ENCODE measurements at regions of chr15 and their contacts with region 1.

Region 1: DNA sequence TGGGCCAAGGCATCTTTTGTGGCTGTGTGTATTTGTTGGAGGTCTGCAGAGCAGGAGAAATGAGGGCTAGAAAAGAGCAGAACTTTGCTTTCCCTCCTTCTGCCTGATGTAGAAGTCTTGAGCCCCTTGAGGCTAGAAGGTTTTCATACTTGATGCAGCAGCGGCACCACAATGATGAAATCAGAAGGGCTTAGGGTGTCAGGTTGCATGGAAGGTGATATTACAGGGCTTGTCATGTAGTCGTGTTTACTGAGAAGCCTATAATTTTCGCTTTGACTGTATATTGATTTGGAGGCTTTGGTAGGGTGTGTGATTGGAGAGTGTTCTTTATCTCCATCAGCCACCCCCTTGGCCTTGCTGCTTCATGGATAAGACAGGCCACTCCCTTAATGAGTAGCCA is 339.8 kb downstream of the THSD4 start:
- DNase-seq: no peak
- ATAC-seq: no peak
- H3K4me3 ChIP-seq: no peak overlapping the region
- H3K27ac ChIP-seq: no peak overlapping the region
- H3K4me1 ChIP-seq: peaks cover 5 to 64% (median 14%) of the 10 kb centered on the region in 9 donors
- H3K27me3 ChIP-seq: no peaks in the 10 kb centered on the region
- CTCF ChIP-seq: no peak

Region 2: GRCh38 chr15:70617076-70617910 is 837.8 kb before region 1 on chr15:
- intact Hi-C with region 1: no loop called
- DNase-seq: no peak
- ATAC-seq: no peak
- H3K4me3 ChIP-seq: no peak overlapping the region
- H3K27ac ChIP-seq: no peak overlapping the region
- H3K4me1 ChIP-seq: no peaks in the 10 kb centered on the region
- H3K27me3 ChIP-seq: peaks cover 0 to 2% (median 0%) of the 10 kb centered on the region in 7 donors
- CTCF ChIP-seq: no peak

Region 3: GRCh38 chr15:71562251-71562650 is 107.1 kb after region 1 on chr15:
- intact Hi-C with region 1: loop called in 1 of 10 experiments (anchors 10 kb)
- DNase-seq: no peak
- ATAC-seq: no peak
- H3K4me3 ChIP-seq: no peak overlapping the region
- H3K27ac ChIP-seq: no peak overlapping the region
- H3K4me1 ChIP-seq: peaks cover 0 to 20% (median 9%) of the 10 kb centered on the region in 9 donors
- H3K27me3 ChIP-seq: no peaks in the 10 kb centered on the region
- CTCF ChIP-seq: no peak

Measured in heart right ventricle (tissue), 16 donors.